ENCODE measurements at regions of chr7 and their contacts with region 1.

Region 1: DNA sequence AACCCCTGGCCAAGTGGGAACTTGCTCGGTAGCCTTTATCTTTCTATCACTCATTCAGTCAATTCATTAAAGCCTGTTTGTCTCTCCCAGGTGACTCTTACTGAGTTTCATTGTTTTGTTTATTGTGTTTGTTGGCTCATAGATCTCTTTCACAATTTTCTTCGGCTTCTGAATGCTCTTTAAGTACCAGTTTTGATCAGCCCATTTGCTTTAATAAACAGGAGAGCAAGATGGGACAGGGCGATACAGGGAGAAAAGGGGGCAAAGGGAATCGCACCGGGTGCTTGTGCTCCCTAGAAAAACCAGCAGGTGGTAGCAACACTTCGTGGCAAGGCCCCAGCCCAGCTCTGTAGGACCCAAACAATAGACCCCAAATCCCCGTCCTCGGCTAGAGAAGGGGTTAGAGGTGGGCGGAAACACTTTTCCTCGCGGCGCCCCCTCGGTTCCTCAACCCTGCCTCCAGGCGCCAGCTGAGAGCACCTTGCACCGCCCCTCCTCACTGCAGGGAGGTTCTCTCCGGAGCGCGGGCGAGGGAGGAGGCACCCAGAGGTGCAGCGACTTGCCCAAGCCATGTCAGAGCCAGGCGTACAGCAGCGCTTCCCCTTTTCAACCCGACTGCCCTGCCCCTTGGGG is 1.0 kb upstream of the EPHB6 start:
- DNase-seq: peak; percentile 92
- H3K4me3 ChIP-seq: peak overlapping the region; percentile 61 to 89
- H3K27ac ChIP-seq: no peak overlapping the region; a peak in 1 of 4 replicates
- H3K4me1 ChIP-seq: peaks cover 0 to 14% of the 10 kb centered on the region in 2 experiments; a peak in 1 of 4 replicates
- H3K27me3 ChIP-seq: peaks cover 42% of the 10 kb centered on the region; the same call in 1 of the 2 replicates
- CTCF ChIP-seq: peak; percentile 96
- EP300 ChIP-seq: no peak
- RAD21 ChIP-seq: peak; percentile 81

Region 2: DNA sequence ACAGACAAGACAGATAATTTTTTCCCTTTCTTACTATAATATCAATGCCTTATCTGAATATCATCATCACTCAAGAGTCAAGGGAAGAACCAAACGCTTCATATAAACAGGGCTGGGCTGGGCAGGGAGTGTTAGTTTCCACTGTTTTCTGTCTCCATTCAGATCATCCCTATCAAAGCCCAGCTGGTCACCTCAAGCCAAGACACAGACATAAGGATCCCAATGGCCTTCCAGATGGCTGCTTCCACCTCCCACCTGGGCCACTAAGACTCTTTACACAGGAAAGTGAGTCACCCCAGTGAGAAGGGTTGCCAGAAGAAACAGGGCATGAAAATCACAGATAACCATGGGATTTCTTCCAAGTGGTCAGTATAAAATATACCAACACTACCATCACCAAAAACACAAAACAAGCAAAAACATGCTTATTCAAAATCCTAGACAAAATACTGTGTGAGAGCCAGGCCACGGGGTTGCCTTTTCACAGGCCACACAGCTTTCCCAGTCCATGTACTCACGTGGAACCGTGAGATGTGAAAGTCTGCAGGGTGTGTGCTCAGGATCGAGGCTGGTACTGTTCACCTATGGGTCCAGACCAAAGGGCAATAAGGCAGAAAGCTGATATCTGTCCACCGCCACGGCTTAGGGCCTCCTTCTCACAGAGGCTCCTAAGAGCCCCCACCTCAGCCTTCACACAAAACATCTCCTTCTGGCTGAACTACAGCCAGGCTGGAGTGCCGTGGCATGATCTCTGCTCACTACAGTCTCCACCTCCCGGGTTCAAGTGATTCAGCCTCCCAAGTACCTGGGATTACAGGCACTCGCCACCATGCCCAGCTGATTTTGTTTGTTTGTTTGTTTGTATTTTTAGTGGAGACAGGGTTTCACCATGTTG is 98.9 kb before region 1 on chr7:
- CTCF ChIA-PET with region 1: no interaction called
- POLR2A ChIA-PET with region 1: no interaction called
- DNase-seq: no peak
- H3K4me3 ChIP-seq: no peak overlapping the region
- H3K27ac ChIP-seq: no peak overlapping the region
- H3K4me1 ChIP-seq: peaks cover 0 to 10% of the 10 kb centered on the region in 2 experiments; a peak in 1 of 4 replicates
- H3K27me3 ChIP-seq: peaks cover 26% of the 10 kb centered on the region; the same call in 1 of the 2 replicates
- CTCF ChIP-seq: no peak
- EP300 ChIP-seq: no peak
- RAD21 ChIP-seq: no peak

Region 3: GRCh38 chr7:142771353-142771723 is 82.5 kb before region 1 on chr7:
- CTCF ChIA-PET with region 1: no interaction called
- POLR2A ChIA-PET with region 1: no interaction called
- DNase-seq: no peak
- H3K4me3 ChIP-seq: no peak overlapping the region
- H3K27ac ChIP-seq: no peak overlapping the region
- H3K4me1 ChIP-seq: no peaks in the 10 kb centered on the region
- H3K27me3 ChIP-seq: peaks cover 41% of the 10 kb centered on the region
- CTCF ChIP-seq: no peak
- EP300 ChIP-seq: no peak
- RAD21 ChIP-seq: no peak

Region 4: GRCh38 chr7:142842251-142842766 is 11.5 kb before region 1 on chr7:
- CTCF ChIA-PET with region 1: interaction called, 10 read pairs
- POLR2A ChIA-PET with region 1: no interaction called
- DNase-seq: no peak
- H3K4me3 ChIP-seq: no peak overlapping the region
- H3K27ac ChIP-seq: no peak overlapping the region
- H3K4me1 ChIP-seq: no peaks in the 10 kb centered on the region
- H3K27me3 ChIP-seq: no peaks in the 10 kb centered on the region
- CTCF ChIP-seq: no peak
- EP300 ChIP-seq: no peak
- RAD21 ChIP-seq: no peak

Region 5: DNA sequence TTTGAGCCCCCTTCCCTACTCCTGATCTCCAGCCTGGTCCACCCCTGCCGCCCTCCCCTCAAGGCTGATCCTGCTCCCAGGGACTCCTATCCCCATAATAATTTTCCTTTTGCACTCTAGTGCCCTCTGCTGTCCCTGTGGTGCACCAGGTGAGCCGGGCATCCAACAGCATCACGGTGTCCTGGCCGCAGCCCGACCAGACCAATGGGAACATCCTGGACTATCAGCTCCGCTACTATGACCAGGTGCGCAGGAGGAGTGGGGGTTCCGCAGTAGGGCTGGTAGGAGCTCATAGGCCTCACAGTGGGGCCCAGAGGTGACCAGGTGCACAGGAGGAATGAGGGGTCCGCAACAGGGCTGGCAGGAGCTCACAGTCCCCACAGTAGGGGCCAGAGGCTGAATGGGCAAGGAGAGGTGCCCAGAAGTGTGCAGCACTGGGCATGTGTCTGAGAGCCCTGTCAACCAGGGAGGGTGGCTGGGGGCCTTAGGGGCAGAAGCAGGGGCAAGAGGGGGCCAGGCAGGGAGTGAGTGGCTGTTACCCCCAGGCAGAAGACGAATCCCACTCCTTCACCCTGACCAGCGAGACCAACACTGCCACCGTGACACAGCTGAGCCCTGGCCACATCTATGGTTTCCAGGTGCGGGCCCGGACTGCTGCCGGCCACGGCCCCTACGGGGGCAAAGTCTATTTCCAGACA is 12.7 kb after region 1 on chr7:
- CTCF ChIA-PET with region 1: interaction called, 154 read pairs
- POLR2A ChIA-PET with region 1: no interaction called
- DNase-seq: peak; percentile 88
- H3K4me3 ChIP-seq: no peak overlapping the region
- H3K27ac ChIP-seq: no peak overlapping the region
- H3K4me1 ChIP-seq: no peaks in the 10 kb centered on the region
- H3K27me3 ChIP-seq: peaks cover 11% of the 10 kb centered on the region
- CTCF ChIP-seq: peak; percentile 77
- EP300 ChIP-seq: no peak
- RAD21 ChIP-seq: peak; percentile 69

Region 6: DNA sequence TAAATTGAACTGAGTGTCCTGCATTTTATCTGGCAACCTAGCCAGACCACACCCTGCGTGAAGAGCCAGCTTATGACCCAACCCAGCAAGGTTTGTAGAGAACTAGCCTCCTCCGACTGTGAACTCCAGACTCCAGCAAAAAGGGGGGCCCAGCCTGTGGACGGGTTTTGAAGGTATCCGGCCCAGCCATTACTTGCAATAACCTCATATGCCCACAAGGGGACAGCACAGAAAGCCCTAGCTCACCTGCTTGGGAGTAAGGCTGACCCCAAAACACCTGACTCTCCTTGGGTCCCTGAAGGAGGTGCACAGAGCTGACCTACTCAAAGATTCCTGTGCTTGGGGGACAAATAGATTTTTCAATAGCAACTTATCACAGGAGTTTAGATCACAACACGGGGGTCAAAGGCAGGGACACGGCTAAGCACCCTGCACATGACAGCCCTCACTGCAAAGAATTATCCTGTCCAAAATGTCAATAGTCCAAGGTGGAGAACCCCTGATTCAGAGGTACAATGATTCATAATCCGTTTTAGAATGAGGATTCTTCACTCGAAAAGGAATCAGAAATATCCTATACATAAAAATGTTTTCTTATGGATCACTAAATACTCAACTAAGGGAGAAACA is 27.1 kb after region 1 on chr7:
- CTCF ChIA-PET with region 1: interaction called, 13 read pairs
- POLR2A ChIA-PET with region 1: interaction called, 3 read pairs
- DNase-seq: peak; percentile 73
- H3K4me3 ChIP-seq: no peak overlapping the region; a peak in 1 of 4 replicates
- H3K27ac ChIP-seq: no peak overlapping the region
- H3K4me1 ChIP-seq: no peaks in the 10 kb centered on the region
- H3K27me3 ChIP-seq: peaks cover 79% of the 10 kb centered on the region
- CTCF ChIP-seq: peak; percentile 75
- EP300 ChIP-seq: no peak
- RAD21 ChIP-seq: peak; percentile 48

Measured in SK-N-SH (cell line).